PC-3 (cell line): ENCODE measurements at regions of chr1 and their contacts with region 1.

Region 1: DNA sequence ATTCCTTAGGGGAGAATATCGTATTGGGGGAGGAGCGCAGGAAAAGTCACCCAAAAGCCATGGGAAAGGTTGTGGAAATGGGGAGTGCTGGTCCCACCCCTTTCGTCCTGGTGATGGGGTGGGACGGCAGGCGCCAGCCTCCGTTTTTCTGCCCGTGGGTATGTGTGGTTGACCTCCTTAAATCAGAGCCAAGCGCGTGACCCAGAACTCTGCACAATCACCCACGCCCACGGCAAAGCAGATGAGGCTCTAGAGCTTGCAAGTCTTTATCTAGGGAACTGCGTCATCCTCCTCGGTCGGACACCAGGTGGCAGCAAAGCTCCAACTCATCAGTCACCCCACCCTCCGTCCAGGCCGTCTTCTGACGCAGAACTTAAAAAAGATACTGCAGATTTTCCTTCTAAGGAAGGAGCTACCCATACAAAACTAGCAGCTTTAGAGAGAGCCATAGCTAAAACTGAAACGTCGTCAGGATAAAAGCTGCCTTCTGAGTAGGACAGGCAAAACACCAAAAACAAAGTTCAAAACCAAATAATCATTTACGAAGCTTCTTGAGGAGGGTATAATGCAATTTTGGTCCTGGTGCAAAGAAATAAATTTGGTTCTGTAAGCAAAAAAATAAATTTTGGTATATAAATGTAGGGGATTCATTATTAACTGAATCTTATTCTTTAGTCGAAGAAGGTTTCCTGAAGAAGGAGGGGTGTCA is 62.0 kb downstream of the TBX19 start:
- DNase-seq: peak; percentile 92
- ATAC-seq: peak; percentile 96
- H3K4me3 ChIP-seq: peak overlapping the region; percentile 47
- H3K27ac ChIP-seq: no peak overlapping the region
- H3K4me1 ChIP-seq: peaks cover 12% of the 10 kb centered on the region; the same call in 1 of the 2 replicates
- H3K27me3 ChIP-seq: no peaks in the 10 kb centered on the region
- CTCF ChIP-seq: peak; percentile 70

Region 2: DNA sequence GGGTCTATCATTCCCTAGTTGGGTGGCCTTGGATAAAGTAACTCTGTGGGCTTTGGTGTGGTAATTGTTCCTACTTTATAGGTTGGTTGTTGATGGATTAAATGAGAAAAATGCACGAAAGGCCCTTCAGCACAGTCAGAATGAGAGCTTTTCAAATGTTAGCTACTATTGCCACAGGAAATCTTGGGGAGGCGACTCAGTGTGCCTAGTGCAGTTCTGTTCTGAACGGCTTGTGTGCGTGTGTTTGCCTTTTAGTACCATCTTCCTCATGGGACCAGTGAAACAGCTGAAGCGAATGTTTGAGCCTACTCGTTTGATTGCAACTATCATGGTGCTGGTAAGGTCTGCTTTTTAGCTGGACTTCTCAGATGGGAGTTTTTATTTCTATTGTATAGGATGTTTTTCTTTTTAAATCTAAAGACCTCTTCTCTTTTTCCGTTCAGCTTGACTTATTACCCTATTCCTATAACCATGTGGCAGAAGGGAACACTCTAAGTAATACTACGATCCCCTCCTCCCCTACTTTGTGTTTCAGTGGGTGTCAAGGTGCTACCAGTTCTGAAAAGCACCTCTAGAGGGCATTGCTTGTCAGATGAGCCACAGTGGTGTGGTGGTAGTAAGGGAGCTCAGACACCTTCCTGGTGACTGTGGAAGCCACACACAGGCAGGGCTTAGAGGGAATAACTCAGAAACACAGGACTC is 107.7 kb before region 1 on chr1:
- CTCF ChIA-PET with region 1: interaction called, 10 read pairs
- POLR2A ChIA-PET with region 1: no interaction called
- intact Hi-C with region 1: no loop called
- DNase-seq: peak; percentile 84
- ATAC-seq: peak; percentile 93
- H3K4me3 ChIP-seq: no peak overlapping the region
- H3K27ac ChIP-seq: no peak overlapping the region
- H3K4me1 ChIP-seq: peaks cover 18% of the 10 kb centered on the region
- H3K27me3 ChIP-seq: no peaks in the 10 kb centered on the region
- CTCF ChIP-seq: peak; percentile 92

Region 3: DNA sequence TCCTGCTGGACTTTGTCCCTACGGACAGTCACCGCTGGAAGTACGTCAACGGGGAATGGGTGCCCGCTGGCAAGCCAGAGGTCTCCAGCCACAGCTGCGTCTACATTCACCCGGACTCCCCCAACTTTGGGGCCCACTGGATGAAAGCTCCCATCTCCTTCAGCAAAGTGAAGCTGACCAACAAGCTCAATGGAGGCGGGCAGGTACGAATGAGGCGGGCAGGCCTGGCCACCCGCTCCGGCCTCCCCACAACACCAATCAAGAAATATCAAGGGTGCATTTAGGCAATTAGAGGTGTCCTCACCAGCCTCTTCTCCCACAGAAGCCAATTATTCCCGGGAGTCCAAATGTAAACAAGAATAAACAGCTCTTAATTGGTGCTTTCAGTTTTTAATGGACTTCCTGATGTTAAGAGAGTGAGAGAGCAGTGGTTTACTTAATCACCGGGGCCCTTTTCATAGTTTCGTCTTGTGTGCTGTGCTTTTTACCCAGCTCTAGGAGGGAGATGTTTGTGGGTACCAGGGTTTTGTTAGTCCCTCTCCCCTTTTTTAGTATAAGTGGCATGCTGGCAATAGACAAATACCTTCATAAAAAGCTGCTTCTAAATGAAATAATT is 51.4 kb before region 1 on chr1:
- CTCF ChIA-PET with region 1: no interaction called
- POLR2A ChIA-PET with region 1: no interaction called
- intact Hi-C with region 1: no loop called
- DNase-seq: no peak
- ATAC-seq: no peak
- H3K4me3 ChIP-seq: no peak overlapping the region
- H3K27ac ChIP-seq: no peak overlapping the region
- H3K4me1 ChIP-seq: peaks cover 27% of the 10 kb centered on the region
- H3K27me3 ChIP-seq: no peaks in the 10 kb centered on the region
- CTCF ChIP-seq: no peak

Region 4: DNA sequence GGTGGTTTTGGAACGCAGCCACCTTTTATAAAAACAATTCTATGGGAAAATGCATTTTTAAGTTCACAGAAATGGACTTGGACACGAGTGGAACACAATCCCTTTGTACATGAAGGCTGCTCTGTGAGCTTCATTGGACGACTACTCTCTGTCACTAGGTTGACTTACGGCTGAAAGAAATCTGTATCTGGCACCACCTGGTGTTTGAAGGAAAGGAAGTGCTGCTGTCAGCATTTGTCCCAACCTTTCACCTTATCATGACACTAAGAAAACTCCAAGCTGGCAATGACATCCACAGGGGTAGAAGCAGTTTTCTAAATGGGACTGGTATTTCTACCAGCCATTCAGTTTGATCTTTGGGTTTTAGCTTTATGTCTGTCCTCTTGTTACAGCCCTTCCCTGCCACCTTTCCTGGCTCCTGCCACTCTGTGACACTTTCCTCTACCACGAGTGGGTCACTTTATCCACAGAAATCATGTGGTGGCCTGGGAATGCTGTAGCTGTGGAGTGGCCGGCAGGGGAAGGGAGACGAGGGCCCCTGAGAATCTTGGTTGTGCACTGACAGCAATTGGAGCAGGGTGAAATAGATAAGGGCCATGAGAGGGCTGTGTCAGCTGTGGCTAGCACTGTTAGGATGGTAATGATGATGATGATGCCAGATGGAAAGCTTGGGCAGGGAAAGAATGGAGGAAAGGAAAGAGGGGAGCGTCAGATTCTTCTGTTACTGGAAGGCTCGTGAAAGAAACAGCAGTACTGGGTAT is 23.2 kb after region 1 on chr1:
- CTCF ChIA-PET with region 1: interaction called, 22 read pairs
- POLR2A ChIA-PET with region 1: no interaction called
- intact Hi-C with region 1: no loop called
- DNase-seq: peak; percentile 30
- ATAC-seq: peak; percentile 28; the same call in 1 of the 2 replicates
- H3K4me3 ChIP-seq: no peak overlapping the region
- H3K27ac ChIP-seq: no peak overlapping the region
- H3K4me1 ChIP-seq: peaks cover 16% of the 10 kb centered on the region
- H3K27me3 ChIP-seq: no peaks in the 10 kb centered on the region
- CTCF ChIP-seq: peak; percentile 49

Region 5: GRCh38 chr1:168390261-168390660 is 47.5 kb after region 1 on chr1:
- CTCF ChIA-PET with region 1: no interaction called
- POLR2A ChIA-PET with region 1: no interaction called
- intact Hi-C with region 1: no loop called
- DNase-seq: peak; percentile 89
- ATAC-seq: peak; percentile 56
- H3K4me3 ChIP-seq: no peak overlapping the region
- H3K27ac ChIP-seq: peak overlapping the region; percentile 33
- H3K4me1 ChIP-seq: peaks cover 37% of the 10 kb centered on the region
- H3K27me3 ChIP-seq: no peaks in the 10 kb centered on the region
- CTCF ChIP-seq: no peak

Region 6: DNA sequence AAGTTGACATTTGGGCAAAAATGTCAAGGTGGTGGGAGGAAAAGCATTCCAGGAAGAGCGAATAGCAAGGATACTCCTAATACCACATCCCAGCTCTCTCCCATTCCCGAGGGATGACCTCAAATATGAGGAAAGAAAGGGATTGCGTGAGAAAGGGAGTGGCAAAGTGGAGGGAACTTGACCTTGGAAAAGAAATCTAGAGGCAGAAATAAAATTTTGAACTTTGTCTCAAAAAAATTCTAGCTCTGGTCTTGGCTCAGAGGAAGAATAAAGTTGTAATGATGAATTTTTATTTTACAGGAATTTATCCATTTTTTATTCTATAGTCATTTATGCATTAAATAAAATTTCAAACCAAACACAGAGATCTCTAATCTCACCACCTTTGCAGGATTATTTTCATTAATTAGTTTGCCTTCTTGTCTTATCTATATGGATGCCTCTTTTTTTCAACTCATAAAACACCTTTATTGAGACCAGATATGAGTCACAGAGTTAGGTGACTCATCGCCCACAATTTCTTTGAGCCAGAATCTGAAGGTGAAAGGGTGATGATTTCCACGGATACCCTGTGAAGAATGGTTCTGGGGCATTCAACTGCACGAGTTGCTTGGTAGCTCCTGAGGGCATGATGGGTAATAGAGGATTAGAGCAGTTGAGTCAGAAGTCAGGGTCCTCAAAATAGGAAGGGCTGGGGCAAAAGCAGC is 66.0 kb after region 1 on chr1:
- CTCF ChIA-PET with region 1: no interaction called
- POLR2A ChIA-PET with region 1: no interaction called
- intact Hi-C with region 1: loop called (anchors 5 kb)
- DNase-seq: peak; percentile 95
- ATAC-seq: peak; percentile 85
- H3K4me3 ChIP-seq: no peak overlapping the region
- H3K27ac ChIP-seq: peak overlapping the region; percentile 55
- H3K4me1 ChIP-seq: peaks cover 23% of the 10 kb centered on the region
- H3K27me3 ChIP-seq: no peaks in the 10 kb centered on the region
- CTCF ChIP-seq: no peak

Region 7: GRCh38 chr1:168421399-168422004 is 78.8 kb after region 1 on chr1:
- CTCF ChIA-PET with region 1: interaction called, 10 read pairs
- POLR2A ChIA-PET with region 1: no interaction called
- intact Hi-C with region 1: no loop called
- DNase-seq: no peak
- ATAC-seq: no peak
- H3K4me3 ChIP-seq: no peak overlapping the region
- H3K27ac ChIP-seq: no peak overlapping the region
- H3K4me1 ChIP-seq: no peaks in the 10 kb centered on the region
- H3K27me3 ChIP-seq: no peaks in the 10 kb centered on the region
- CTCF ChIP-seq: no peak

Region 8: DNA sequence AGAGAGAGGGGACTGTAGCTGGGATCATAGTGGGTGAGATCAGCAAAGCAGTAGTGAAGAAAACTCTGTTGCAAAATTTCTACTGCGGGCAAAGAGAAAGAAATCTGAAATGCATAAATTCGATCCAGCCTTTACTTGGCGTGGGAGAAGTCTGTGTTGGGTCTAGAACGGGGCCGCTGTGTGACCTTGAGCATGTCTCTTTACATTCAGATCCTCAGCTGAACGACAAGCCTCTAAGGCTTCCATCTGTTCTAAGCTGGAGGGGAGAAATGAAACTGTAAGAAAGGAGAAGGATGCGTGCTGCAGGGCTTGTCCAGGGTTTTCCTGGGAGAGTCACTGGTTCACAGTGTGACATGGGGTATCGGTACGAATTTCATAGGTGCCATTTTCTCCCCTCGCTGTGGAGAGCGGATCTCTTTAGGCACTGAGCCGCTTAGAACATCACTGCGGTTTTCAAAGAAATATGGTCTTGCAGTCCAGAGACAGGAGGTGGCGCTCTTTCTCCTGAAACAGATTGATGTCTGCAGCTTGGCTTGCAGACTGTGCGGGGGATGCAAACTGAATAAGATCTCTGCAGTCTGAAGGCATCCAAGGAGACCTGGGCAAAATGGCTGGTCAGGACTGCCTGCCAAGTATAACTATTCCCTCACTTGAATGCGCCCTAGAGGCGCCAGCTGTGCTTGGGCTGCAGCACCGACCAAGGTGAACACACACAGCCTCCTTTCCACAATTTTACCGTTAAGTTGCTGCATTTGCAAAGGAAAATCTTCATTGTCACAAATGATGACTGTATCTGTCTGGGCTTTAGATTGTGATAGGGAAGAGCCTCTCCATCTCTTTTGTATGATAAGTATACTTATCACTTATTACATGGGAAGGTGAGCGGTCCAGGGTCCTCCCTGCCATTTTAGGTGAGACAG is 97.0 kb after region 1 on chr1:
- CTCF ChIA-PET with region 1: interaction called, 28 read pairs
- POLR2A ChIA-PET with region 1: interaction called, 3 read pairs
- intact Hi-C with region 1: loop called (anchors 5 kb)
- DNase-seq: peak; percentile 96
- ATAC-seq: peak; percentile 94
- H3K4me3 ChIP-seq: peak overlapping the region; percentile 57
- H3K27ac ChIP-seq: no peak overlapping the region
- H3K4me1 ChIP-seq: no peaks in the 10 kb centered on the region
- H3K27me3 ChIP-seq: no peaks in the 10 kb centered on the region
- CTCF ChIP-seq: peak; percentile 96

Region 9: GRCh38 chr1:168520052-168520751 is 177.5 kb after region 1 on chr1:
- CTCF ChIA-PET with region 1: no interaction called
- POLR2A ChIA-PET with region 1: no interaction called
- intact Hi-C with region 1: no loop called
- DNase-seq: no peak
- ATAC-seq: no peak
- H3K4me3 ChIP-seq: no peak overlapping the region
- H3K27ac ChIP-seq: no peak overlapping the region
- H3K4me1 ChIP-seq: no peaks in the 10 kb centered on the region
- H3K27me3 ChIP-seq: 0 out of 2 replicates have a peak, but pooled peaks cover 5% of the 10 kb centered on the region
- CTCF ChIP-seq: no peak

Region 10: DNA sequence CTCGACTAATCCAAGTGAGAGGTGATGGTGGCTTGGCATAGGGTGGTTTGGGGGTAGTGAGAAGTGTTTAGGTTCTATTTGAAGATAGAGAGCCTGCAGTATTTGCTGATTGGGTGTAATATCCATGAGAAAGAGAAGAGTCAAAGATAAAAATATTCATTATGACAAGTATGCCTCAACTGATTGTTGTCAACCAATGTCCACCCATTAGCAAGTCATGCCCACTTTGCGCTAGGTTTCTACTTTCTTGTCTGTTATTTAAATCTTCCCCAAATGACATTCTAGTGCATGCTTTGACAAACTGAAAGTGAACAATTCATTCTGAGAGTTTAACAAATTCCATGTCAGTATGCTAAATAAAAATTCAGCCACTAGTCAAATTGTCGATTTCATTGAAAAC is 229.9 kb after region 1 on chr1:
- CTCF ChIA-PET with region 1: interaction called, 6 read pairs
- POLR2A ChIA-PET with region 1: no interaction called
- intact Hi-C with region 1: loop called (anchors 1 kb)
- DNase-seq: no peak
- ATAC-seq: no peak
- H3K4me3 ChIP-seq: no peak overlapping the region
- H3K27ac ChIP-seq: no peak overlapping the region
- H3K4me1 ChIP-seq: no peaks in the 10 kb centered on the region
- H3K27me3 ChIP-seq: peaks cover 26% of the 10 kb centered on the region
- CTCF ChIP-seq: no peak